PC-3 (cell line): ENCODE measurements at regions of chr2 and their contacts with region 1.

Region 1: DNA sequence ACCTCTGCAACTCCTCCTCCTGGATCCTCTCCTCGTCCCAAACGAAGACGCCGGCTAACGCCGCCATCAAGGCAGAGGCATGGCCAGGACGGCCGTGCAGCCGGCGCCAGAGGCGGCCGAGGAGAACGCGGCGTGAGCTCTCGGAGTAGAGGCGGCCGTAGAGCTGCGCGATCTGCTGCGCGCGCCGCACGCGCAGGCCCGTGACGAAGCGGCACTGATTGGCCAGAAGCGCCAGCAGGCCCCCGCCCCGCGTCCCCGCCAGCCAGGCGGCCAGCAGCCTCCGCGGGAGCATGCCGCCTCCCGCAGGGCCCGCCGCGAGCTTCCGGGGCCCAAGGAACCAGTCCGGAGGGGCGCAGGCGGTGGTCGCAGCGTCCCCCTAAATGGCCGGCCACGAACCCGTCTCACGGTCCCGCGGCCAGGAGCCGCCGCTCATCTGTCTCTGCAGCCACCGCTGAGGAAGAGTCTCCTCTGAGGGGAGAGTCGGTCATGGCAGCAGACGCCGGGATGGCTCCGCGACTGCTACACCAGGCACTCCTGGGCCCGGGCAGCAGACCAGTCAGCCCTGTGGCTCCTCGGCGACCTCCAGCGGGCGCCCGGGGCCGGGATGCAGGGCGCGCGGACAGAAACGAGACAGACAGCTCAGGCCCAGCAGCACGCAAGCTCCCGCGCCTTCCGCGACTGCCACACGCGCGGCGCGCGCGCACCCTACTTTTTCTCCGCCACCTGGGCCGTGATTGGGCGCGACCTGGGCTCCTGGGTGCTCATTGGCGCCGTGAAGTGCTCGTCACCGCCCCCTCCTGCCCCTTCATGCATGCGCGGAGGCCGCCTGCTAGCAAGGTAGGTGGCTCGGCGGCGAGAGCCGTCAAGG is at the start of gene STARD7:
- DNase-seq: peak; percentile 98
- ATAC-seq: peak; percentile 92
- H3K4me3 ChIP-seq: peak within 1 kb of the TSS; percentile 75
- H3K27ac ChIP-seq: peak within 1 kb of the TSS; percentile 64
- H3K4me1 ChIP-seq: peaks cover 25% of the 10 kb centered on the region
- H3K27me3 ChIP-seq: no peaks in the 10 kb centered on the region
- CTCF ChIP-seq: no peak
- total RNA-seq, gene STARD7: 164 and 169 TPM in 2 replicates

Region 2: GRCh38 chr2:96167407-96168013 is 40.9 kb before region 1 on chr2:
- CTCF ChIA-PET with region 1: no interaction called
- POLR2A ChIA-PET with region 1: no interaction called
- intact Hi-C with region 1: no loop called
- DNase-seq: no peak
- ATAC-seq: no peak
- H3K4me3 ChIP-seq: no peak overlapping the region
- H3K27ac ChIP-seq: no peak overlapping the region
- H3K4me1 ChIP-seq: no peaks in the 10 kb centered on the region
- H3K27me3 ChIP-seq: no peaks in the 10 kb centered on the region
- CTCF ChIP-seq: no peak

Region 3: DNA sequence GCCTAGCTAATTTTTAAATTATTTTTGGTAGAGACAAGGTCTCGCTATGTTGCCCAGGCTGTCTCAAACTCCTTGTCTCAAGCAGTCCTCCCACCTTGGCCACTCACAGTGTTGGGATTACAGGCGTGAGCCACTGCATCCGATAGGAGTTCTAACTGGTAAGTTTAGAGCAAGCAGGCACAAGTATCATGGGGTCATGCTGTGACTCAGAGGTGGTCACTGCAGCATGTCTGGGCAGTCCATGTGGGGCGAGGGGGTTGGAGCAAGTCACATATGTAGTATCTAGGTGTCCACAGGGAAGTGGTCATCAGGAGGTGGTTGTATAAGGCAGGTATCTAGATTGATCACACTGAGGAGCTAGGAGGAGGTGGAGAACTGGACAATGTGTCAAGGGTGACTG is 22.9 kb after region 1 on chr2:
- CTCF ChIA-PET with region 1: no interaction called
- POLR2A ChIA-PET with region 1: interaction called, 10 read pairs
- intact Hi-C with region 1: no loop called
- DNase-seq: no peak
- ATAC-seq: no peak
- H3K4me3 ChIP-seq: no peak overlapping the region
- H3K27ac ChIP-seq: no peak overlapping the region
- H3K4me1 ChIP-seq: no peaks in the 10 kb centered on the region
- H3K27me3 ChIP-seq: no peaks in the 10 kb centered on the region
- CTCF ChIP-seq: no peak

Region 4: GRCh38 chr2:96260404-96261260 is 52.3 kb after region 1 on chr2:
- CTCF ChIA-PET with region 1: interaction called, 9 read pairs
- POLR2A ChIA-PET with region 1: no interaction called
- intact Hi-C with region 1: loop called (anchors 2 kb)
- DNase-seq: peak; percentile 91
- ATAC-seq: peak; percentile 85
- H3K4me3 ChIP-seq: no peak overlapping the region
- H3K27ac ChIP-seq: peak overlapping the region; percentile 70
- H3K4me1 ChIP-seq: peaks cover 43% of the 10 kb centered on the region
- H3K27me3 ChIP-seq: no peaks in the 10 kb centered on the region
- CTCF ChIP-seq: peak; percentile 75

Region 5: DNA sequence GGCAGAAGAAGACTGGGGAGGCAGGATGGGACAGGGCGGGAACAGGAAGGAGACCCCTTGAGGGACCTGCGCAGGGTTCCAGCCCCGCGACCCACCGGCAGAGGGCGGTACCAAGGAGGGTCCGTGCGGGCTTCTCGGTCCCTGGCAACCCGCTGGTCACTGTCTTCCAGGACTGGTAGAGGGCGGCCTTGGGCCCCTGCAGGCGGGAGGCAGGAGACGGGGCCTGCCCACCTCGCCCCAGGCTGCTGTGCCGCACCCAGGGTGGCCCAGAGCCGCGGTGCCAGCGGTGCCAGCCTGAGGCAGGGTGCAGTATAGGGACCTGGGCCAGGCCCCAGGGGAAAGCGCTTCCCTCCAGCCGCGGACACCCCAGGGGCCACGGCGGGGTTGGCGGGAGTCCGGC is 262.3 kb after region 1 on chr2:
- CTCF ChIA-PET with region 1: no interaction called
- POLR2A ChIA-PET with region 1: no interaction called
- intact Hi-C with region 1: no loop called
- DNase-seq: no peak
- ATAC-seq: no peak
- H3K4me3 ChIP-seq: no peak overlapping the region
- H3K27ac ChIP-seq: no peak overlapping the region
- H3K4me1 ChIP-seq: no peaks in the 10 kb centered on the region
- H3K27me3 ChIP-seq: no peaks in the 10 kb centered on the region
- CTCF ChIP-seq: no peak